WTC11 (cell line): ENCODE measurements at regions of chr4 and their contacts with region 1.

Region 1: DNA sequence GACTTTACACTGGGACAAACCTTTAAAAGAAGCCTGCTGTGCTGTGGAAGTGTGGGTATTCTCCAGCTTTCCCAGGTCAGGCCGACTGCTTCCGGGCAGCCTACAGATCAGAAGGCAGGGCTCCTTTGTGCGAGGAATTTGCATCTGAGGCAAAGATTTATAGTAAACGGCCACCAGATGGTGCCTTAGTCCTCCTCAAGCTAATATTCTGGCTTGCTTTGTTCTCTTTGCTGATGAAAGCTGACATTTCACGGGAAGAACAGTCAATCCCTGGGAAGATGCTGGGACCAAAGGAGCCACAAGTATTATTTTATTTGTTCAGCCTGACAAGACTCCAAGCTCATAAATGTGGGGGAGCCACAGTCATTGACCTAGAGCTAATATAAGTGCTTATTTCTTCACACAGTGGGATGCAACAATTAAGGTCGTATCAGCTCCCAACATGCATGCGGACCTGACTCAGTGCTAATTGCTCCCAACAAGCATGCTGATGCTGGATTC is 120.7 kb upstream of the TRIM2 start:
- DNase-seq: peak; percentile 68
- ATAC-seq: peak; percentile 87
- H3K4me3 Mint-ChIP-seq: no peak overlapping the region
- H3K27ac Mint-ChIP-seq: peak overlapping the region; percentile 60
- H3K4me1 Mint-ChIP-seq: peaks cover 56% of the 10 kb centered on the region
- H3K27me3 Mint-ChIP-seq: peaks cover 14% of the 10 kb centered on the region; the same call in 1 of the 2 replicates
- CTCF ChIP-seq: no peak

Region 2: DNA sequence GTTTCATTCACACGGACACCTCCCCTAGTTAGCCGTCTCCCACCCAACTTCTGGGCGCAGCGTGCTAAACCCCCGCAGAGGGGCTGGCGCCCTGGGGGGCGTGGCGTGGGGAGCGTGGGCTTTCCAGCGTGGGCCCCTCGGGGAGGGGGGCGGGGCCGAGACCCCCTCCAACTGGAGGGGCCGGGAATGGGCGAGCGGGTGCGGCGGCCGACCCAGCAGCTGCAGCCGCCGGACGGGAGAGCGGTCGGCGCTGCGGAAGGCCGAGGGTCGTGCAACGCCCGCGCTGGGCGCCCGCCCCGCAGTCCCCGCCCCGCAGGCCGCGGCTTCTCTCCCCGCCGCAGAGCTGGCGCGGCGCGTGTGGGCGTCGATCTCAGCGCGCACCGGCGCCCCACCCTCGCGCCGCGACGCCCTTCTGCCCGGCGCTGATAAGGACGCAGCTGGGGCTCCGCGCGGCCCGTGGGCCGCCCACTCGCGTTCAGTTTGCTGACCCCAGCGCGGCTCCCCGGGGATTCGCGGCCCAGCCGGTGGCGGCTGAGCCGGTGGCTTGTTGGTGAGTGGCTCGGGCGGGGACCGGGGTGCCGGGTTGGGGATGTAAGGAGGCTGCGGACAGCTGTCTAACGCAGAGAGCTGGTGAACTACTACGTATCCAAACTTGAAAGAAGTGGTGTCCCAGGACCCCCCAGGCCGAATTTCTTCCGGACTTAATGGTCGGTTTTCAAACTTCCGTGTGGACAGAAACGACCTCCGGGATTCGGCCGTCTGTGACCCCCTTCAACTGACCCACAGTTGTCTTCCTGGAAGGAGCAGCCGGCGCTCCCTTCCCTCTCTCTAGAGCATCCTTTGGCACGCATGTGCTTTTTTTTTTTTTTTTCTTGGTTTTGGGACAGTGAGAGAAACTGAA is 145.9 kb before region 1 on chr4:
- CTCF ChIA-PET with region 1: interaction called, 19 read pairs
- POLR2A ChIA-PET with region 1: interaction called, 4 read pairs
- DNase-seq: peak; percentile 37
- ATAC-seq: no peak
- H3K4me3 Mint-ChIP-seq: peak overlapping the region; percentile 84
- H3K27ac Mint-ChIP-seq: no peak overlapping the region
- H3K4me1 Mint-ChIP-seq: peaks cover 49% of the 10 kb centered on the region
- H3K27me3 Mint-ChIP-seq: peaks cover 27% of the 10 kb centered on the region
- CTCF ChIP-seq: no peak

Region 3: DNA sequence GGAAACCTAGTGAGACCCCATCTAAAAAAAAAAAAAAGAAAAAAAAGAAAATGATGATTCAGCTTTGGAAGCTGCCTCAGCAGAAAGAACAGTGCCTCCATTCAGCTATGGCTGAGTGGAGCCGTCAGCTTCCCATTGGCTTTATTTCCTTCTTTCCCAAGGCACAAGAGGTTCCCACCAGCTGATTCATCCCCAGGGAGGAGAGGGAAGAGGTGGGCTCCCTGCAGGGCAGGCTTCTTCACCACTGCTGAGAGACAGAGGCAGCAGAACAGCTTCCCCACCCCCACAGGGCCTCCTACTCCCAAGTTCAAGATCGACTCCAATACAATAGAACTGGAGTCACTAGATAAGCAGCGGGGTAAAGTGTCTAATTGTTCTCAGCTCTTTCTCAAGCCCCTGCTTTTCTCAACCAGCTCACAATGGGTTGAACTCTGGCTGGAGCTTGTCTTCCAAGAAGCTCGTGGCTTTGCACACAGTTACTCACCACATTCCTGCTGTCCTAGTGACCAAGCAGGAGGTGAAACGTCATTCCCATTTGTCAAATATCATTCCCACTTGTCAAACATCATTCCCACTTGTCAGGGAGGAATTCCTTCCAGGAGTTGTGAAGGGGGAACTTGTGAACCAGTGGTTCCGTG is 99.6 kb before region 1 on chr4:
- CTCF ChIA-PET with region 1: interaction called, 16 read pairs
- POLR2A ChIA-PET with region 1: no interaction called
- DNase-seq: no peak
- ATAC-seq: no peak
- H3K4me3 Mint-ChIP-seq: no peak overlapping the region
- H3K27ac Mint-ChIP-seq: no peak overlapping the region
- H3K4me1 Mint-ChIP-seq: peaks cover 18% of the 10 kb centered on the region
- H3K27me3 Mint-ChIP-seq: no peaks in the 10 kb centered on the region
- CTCF ChIP-seq: no peak

Region 4: DNA sequence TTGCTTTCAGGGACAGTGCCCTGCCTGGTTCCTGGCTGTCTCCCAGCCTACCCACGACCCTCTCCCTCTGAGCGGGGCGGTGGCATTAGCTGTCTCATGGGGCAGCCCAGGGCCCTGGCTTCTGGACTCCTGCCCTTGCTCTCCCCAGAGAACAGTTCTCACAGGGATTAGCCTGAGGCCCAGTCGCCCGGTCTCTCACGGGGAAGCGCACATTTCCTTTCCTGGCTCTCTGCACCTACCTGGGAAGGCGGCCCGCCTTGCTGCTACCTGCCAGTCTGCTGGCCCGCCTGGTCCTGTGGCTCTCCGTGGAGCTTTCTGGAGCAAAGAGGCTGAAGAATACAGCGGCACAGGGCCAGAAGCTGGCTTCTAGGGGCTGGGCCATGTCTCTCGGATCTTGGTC is 18.9 kb before region 1 on chr4:
- CTCF ChIA-PET with region 1: interaction called, 11 read pairs
- POLR2A ChIA-PET with region 1: no interaction called
- DNase-seq: peak; percentile 46
- ATAC-seq: peak; percentile 72
- H3K4me3 Mint-ChIP-seq: no peak overlapping the region
- H3K27ac Mint-ChIP-seq: no peak overlapping the region
- H3K4me1 Mint-ChIP-seq: peaks cover 27% of the 10 kb centered on the region
- H3K27me3 Mint-ChIP-seq: no peaks in the 10 kb centered on the region
- CTCF ChIP-seq: no peak

Region 5: GRCh38 chr4:153115322-153116290 is 32.1 kb after region 1 on chr4:
- CTCF ChIA-PET with region 1: interaction called, 13 read pairs
- POLR2A ChIA-PET with region 1: no interaction called
- DNase-seq: no peak
- ATAC-seq: no peak
- H3K4me3 Mint-ChIP-seq: no peak overlapping the region
- H3K27ac Mint-ChIP-seq: no peak overlapping the region
- H3K4me1 Mint-ChIP-seq: no peaks in the 10 kb centered on the region
- H3K27me3 Mint-ChIP-seq: no peaks in the 10 kb centered on the region
- CTCF ChIP-seq: no peak